ENCODE measurements at regions of chr1 and their contacts with region 1.

Region 1: DNA sequence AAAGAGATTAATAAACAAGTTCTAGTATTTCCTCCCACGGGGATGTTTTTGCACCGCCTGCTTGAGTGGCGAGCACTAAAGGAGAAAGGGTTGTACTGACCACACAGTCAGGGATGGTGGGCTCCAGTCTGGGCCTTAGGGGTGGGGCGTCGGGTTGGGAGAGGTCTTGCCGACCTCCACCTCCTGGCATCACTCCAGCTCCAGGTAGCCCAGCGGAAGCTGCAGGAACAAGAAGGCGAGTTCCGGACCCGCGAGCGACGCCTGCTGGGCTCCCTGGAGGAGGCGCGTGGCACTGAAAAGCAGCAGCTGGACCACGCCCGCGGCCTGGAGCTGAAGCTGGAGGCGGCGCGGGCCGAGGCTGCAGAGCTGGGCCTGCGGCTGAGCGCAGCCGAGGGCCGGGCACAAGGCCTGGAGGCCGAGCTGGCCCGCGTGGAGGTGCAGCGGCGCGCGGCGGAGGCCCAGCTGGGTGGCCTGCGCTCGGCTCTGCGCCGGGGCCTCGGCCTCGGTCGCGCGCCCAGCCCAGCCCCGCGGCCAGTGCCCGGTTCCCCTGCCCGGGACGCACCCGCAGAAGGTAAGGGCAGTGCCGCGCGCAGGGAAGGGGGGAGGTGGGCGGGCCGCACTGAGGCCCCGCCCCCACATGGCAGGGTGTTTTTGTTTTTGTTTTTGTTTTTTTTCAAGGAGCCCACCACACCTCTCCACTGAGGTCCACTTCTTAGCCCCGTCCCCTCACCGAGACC is 19.7 kb downstream of the MFAP2 start:
- DNase-seq: peak; percentile 50 to 83 (median 66)
- ATAC-seq: peak; percentile 92
- H3K4me3 ChIP-seq: peak overlapping the region; percentile 40
- H3K4me3 Mint-ChIP-seq: peak overlapping the region; percentile 71 to 87 (median 82)
- H3K27ac ChIP-seq: peak overlapping the region; percentile 48
- H3K27ac Mint-ChIP-seq: peak overlapping the region; percentile 14 to 83 (median 68)
- H3K4me1 ChIP-seq: peaks cover 0 to 4% of the 10 kb centered on the region in 2 donors
- H3K4me1 Mint-ChIP-seq: peaks cover 4 to 14% (median 10%) of the 10 kb centered on the region in 7 donors
- H3K27me3 ChIP-seq: no peaks in the 10 kb centered on the region
- H3K27me3 Mint-ChIP-seq: no peaks in the 10 kb centered on the region

Region 2: DNA sequence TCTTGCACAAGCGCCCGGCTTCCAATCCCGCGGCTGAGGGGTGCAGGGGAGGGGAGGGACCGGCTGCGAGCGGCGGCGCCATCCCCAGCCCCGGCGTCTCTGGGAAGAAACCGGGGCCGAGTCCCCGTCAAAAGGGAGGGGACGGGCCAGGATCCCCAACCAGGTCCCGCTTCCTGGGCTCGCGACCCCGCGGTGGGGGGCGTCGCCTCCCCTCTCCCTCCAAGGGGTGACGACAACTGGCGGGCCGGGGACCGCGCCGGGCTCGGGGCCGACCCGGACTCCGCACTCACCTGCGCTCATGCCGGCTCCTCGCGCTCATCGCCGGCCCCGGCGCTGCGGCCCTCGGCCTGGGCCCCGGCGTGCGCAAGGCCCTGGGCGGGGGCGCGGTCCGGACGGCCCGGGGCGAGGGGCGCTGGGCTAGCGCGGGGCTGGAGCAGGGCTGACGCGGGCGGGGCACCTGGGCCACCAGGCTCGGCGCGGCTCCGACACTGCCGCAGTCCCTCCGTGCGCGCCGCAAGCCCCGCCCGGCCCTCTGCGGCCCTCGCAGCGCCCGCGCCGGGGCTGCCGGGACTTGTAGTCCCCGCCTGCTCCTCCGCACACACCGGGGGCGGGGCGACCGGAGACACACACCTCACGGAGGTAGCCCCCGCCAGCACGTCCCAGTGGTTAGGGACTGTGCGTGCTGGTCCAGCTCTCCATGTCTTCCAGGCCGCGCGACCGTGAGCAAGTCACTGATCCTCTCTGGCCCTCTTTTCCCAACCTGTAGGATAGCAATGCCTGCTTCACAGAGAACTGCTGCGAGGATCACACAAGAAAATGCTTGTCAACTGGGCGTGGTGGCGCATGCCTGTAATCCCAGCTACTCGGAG is 50.9 kb after region 1 on chr1 and contains the start of gene ATP13A2:
- CTCF ChIA-PET with region 1: interaction called, 3 read pairs
- POLR2A ChIA-PET with region 1: no interaction called
- intact Hi-C with region 1: loop called in 1 of 2 experiments (anchors 10 kb)
- DNase-seq: peak; percentile 76 to 87 (median 82)
- ATAC-seq: peak; percentile 99
- H3K4me3 ChIP-seq: peak within 1 kb of the TSS; percentile 72
- H3K4me3 Mint-ChIP-seq: peak within 1 kb of the TSS; percentile 81 to 91 (median 86)
- H3K27ac ChIP-seq: peak within 1 kb of the TSS; percentile 72
- H3K27ac Mint-ChIP-seq: peak within 1 kb of the TSS; percentile 23 to 83 (median 75)
- H3K4me1 ChIP-seq: peaks cover 15 to 16% of the 10 kb centered on the region in 2 donors
- H3K4me1 Mint-ChIP-seq: peaks cover 9 to 27% (median 17%) of the 10 kb centered on the region in 7 donors
- H3K27me3 ChIP-seq: no peaks in the 10 kb centered on the region
- H3K27me3 Mint-ChIP-seq: peaks cover 0 to 2% (median 0%) of the 10 kb centered on the region in 5 donors
- total RNA-seq, gene ATP13A2: 32.9 to 57.4 (median 42.1) TPM

Region 3: GRCh38 chr1:17045634-17046333 is 85.1 kb after region 1 on chr1:
- CTCF ChIA-PET with region 1: interaction called, 6 read pairs
- POLR2A ChIA-PET with region 1: no interaction called
- intact Hi-C with region 1: loop called in 1 of 2 experiments (anchors 1 kb)
- DNase-seq: peak in 6 of 9 donors; percentile 21 to 47 (median 28)
- ATAC-seq: peak; percentile 50
- H3K4me3 ChIP-seq: no peak overlapping the region
- H3K4me3 Mint-ChIP-seq: peak overlapping the region in 2 of 10 donors; percentile 4 to 49
- H3K27ac ChIP-seq: no peak overlapping the region
- H3K27ac Mint-ChIP-seq: peak overlapping the region in 6 of 9 donors; percentile 45 to 79 (median 66)
- H3K4me1 ChIP-seq: peaks cover 0 to 3% of the 10 kb centered on the region in 2 donors
- H3K4me1 Mint-ChIP-seq: peaks cover 5 to 28% (median 20%) of the 10 kb centered on the region in 7 donors
- H3K27me3 ChIP-seq: no peaks in the 10 kb centered on the region
- H3K27me3 Mint-ChIP-seq: no peaks in the 10 kb centered on the region

Region 4: GRCh38 chr1:17222557-17222956 is 261.8 kb after region 1 on chr1:
- CTCF ChIA-PET with region 1: no interaction called
- POLR2A ChIA-PET with region 1: no interaction called
- intact Hi-C with region 1: no loop called
- DNase-seq: no peak
- ATAC-seq: no peak
- H3K4me3 ChIP-seq: no peak overlapping the region
- H3K4me3 Mint-ChIP-seq: no peak overlapping the region
- H3K27ac ChIP-seq: no peak overlapping the region
- H3K27ac Mint-ChIP-seq: no peak overlapping the region
- H3K4me1 ChIP-seq: no peaks in the 10 kb centered on the region
- H3K4me1 Mint-ChIP-seq: no peaks in the 10 kb centered on the region
- H3K27me3 ChIP-seq: no peaks in the 10 kb centered on the region
- H3K27me3 Mint-ChIP-seq: peaks cover 0 to 2% (median 0%) of the 10 kb centered on the region in 5 donors

Region 5: DNA sequence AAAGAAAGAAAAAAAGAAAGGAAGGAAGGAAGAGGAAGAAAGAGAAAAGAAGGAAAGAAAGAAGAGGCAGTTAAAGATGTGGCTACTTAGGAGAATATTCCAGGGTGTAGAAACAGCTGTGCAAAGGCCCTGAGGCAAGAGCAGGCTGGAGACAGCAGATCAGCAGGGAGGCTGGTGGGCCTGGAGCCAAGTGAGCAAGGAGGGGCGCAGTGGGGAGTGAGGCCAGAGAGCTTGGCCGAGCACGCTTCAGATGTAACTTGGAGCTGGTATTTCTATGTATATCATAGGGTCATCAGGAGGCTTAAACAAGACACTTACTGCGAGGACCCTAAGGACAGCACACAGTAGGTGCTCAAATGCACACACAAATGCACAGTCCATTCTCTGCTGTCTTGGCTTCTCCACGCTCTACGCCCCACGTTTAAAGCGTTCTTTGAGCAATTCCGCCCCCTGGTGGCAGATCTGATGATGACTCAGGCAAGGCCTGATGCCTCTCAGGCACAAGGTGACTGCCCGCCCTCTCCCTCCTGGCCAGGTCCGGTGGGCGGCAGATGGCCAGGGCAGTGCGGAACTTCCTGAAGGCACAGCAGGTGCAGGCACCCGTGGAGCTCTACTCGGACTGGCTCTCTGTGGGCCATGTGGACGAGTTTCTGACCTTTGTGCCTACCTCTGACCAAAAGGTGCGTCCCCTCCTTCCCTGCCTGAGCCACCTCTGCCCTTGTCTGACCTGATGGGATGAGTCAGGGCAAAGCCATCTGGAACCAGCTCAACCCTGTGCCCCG is 276.2 kb after region 1 on chr1:
- CTCF ChIA-PET with region 1: no interaction called
- POLR2A ChIA-PET with region 1: no interaction called
- intact Hi-C with region 1: loop called in 1 of 2 experiments (anchors 10 kb)
- DNase-seq: peak; percentile 54 to 85 (median 80)
- ATAC-seq: peak; percentile 84
- H3K4me3 ChIP-seq: no peak overlapping the region
- H3K4me3 Mint-ChIP-seq: no peak overlapping the region
- H3K27ac ChIP-seq: no peak overlapping the region
- H3K27ac Mint-ChIP-seq: no peak overlapping the region
- H3K4me1 ChIP-seq: no peaks in the 10 kb centered on the region
- H3K4me1 Mint-ChIP-seq: peaks cover 0 to 8% (median 6%) of the 10 kb centered on the region in 7 donors
- H3K27me3 ChIP-seq: no peaks in the 10 kb centered on the region
- H3K27me3 Mint-ChIP-seq: peaks cover 0 to 8% (median 0%) of the 10 kb centered on the region in 5 donors

Region 6: DNA sequence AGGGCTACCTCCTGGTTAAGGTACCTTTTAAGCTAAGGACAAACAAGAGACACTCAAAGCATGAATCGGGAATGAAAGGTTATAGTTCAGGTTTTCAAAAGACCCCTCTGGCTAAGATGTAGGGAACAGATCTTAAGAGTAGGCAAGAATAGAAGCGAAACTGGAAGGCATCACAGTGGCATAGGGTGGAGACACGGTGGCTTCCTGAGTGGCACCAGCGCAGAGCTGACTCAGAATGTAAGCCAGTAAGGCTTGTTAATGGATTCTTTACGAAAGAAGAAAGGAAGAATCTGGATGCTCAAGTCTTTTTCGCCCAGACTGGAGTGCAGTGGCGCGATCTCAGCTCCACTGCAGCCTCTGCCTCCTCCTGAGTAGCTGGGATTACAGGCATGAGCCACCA is 432.5 kb after region 1 on chr1:
- CTCF ChIA-PET with region 1: no interaction called
- POLR2A ChIA-PET with region 1: no interaction called
- intact Hi-C with region 1: no loop called
- DNase-seq: no peak
- ATAC-seq: peak; percentile 69
- H3K4me3 ChIP-seq: no peak overlapping the region
- H3K4me3 Mint-ChIP-seq: no peak overlapping the region
- H3K27ac ChIP-seq: no peak overlapping the region
- H3K27ac Mint-ChIP-seq: no peak overlapping the region
- H3K4me1 ChIP-seq: no peaks in the 10 kb centered on the region
- H3K4me1 Mint-ChIP-seq: peaks cover 0 to 7% (median 0%) of the 10 kb centered on the region in 7 donors
- H3K27me3 ChIP-seq: no peaks in the 10 kb centered on the region
- H3K27me3 Mint-ChIP-seq: peaks cover 0 to 3% (median 0%) of the 10 kb centered on the region in 5 donors